ENCODE measurements at regions of chr15 and their contacts with region 1.

Region 1: GRCh38 chr15:39874890-39875549 is 45.0 kb downstream of the GPR176 start:
- DNase-seq: peak; percentile 35
- H3K4me3 Mint-ChIP-seq: no peak overlapping the region
- H3K27ac Mint-ChIP-seq: no peak overlapping the region
- H3K4me1 Mint-ChIP-seq: peaks cover 10% of the 10 kb centered on the region
- H3K27me3 Mint-ChIP-seq: peaks cover under 1% of the 10 kb centered on the region

Region 2: GRCh38 chr15:39801641-39802309 is 73.2 kb before region 1 on chr15:
- CTCF ChIA-PET with region 1: interaction called, 7 read pairs
- POLR2A ChIA-PET with region 1: no interaction called
- intact Hi-C with region 1: loop called (anchors 5 kb)
- DNase-seq: peak; percentile 38
- H3K4me3 Mint-ChIP-seq: no peak overlapping the region
- H3K27ac Mint-ChIP-seq: no peak overlapping the region
- H3K4me1 Mint-ChIP-seq: no peaks in the 10 kb centered on the region
- H3K27me3 Mint-ChIP-seq: peaks cover 18% of the 10 kb centered on the region

Measured in activated CD4-positive, alpha-beta memory T cell treated with anti-CD3 and anti-CD28 coated beads for 36 hours (primary cell).